ENCODE measurements at regions of chr7 and their contacts with region 1.

Region 1: DNA sequence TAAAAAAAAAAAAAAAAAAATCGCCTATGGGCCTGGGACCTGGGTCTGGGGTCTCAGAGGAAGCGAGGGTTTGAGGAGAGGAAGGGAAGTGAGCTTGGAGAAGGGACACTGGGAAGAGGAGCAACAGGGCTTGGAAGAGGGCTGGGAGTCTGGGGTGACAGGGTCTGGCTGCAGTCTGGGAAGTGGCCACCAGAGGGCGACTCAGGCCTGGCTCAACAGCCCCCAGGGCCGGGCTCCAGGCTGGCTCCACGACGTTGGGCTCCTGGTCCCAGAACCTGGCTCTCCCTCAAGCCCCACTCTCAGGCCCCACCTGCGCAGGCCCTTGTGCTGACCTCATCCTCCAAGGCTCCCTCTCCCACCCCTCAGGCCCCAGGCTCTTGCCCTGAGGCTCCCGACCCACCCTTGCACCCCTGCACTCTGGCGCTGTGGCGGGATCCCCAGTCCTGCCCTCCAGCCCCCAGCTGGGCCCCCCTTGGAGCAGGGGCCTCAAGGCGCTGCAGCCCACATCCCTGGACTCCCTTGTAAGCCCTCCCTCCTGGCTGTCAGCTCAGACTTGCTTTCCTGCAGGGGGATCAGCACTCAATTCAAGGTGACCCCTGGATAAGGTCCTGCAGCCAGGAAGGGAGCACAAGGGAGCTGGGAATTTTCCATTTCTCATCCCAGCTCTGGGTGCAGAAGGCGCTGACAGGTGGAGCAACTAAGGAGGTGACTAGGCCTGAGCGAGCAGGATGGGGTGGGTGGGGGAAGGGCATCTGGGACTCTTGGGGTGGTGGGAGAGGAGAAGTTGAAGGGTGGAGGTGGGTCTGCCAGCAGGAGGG is 5.4 kb upstream of the SPACDR start:
- DNase-seq: peak; percentile 90

Region 2: GRCh38 chr7:100456558-100456957 is 12.9 kb before region 1 on chr7:
- CTCF ChIA-PET with region 1: interaction called, 13 read pairs
- POLR2A ChIA-PET with region 1: no interaction called
- DNase-seq: no peak

Region 3: GRCh38 chr7:100559127-100559526 is 89.7 kb after region 1 on chr7:
- CTCF ChIA-PET with region 1: interaction called, 13 read pairs
- POLR2A ChIA-PET with region 1: no interaction called
- DNase-seq: no peak

Region 4: DNA sequence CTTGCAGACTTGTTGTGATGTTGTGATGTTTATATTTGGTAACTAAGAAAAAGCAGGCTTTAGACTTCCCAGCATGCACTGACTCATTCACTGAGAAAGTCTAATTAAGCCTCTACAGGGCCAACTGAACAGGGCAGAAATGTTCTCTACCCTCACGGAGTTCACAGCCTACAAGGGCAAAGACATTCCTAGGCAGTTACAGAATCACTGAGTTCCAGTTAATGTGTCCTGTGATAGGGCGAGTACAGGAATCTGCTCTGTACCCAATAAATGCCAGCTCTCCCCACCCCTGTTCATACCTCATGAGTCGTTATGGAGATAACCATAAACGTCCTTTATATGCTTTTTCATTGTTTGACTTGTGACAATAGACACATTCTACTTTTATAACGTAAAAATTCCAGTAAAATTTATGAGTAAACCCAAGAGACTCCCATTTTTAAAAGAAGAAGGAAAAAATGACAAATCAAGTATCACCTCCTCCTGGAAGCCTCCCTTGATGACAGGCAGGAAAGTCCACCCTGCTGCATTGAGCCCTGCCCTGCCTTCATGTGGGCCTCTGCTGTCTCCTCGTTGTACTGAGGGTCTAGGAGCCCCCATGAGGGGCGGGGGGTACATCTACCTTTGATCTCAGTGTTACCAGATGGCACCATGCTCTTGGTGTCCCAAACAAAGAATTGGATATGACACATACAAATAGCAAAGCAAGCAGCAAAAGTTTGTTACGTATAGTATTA is 514.2 kb after region 1 on chr7:
- CTCF ChIA-PET with region 1: no interaction called
- POLR2A ChIA-PET with region 1: no interaction called
- DNase-seq: no peak